Astrocyte of the cerebellum (primary cell): ENCODE measurements at regions of chr3 and their contacts with region 1.

Region 1: DNA sequence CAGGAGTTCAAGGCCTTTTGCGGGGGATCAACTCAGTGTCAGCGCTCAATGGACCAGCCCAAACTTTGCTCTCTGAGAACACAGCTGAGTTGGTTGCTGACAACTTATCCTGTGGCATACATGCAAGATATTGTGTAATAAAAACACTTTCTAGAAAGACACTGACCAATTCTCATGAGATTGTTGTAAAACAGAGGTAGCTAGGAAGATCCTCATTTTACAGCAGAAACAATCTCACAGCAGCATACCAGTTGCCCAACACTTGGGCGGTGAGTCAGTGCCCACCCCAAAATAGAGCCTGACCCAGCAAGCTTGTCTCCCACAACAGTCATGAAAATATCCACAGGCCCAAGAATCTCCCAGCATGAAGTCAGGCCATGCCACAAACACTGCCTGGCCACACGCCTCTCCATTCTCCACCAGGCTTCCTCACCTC is 18.2 kb downstream of the KLHL6 start:
- DNase-seq: no peak
- H3K4me3 ChIP-seq: no peak overlapping the region
- CTCF ChIP-seq: no peak

Region 2: DNA sequence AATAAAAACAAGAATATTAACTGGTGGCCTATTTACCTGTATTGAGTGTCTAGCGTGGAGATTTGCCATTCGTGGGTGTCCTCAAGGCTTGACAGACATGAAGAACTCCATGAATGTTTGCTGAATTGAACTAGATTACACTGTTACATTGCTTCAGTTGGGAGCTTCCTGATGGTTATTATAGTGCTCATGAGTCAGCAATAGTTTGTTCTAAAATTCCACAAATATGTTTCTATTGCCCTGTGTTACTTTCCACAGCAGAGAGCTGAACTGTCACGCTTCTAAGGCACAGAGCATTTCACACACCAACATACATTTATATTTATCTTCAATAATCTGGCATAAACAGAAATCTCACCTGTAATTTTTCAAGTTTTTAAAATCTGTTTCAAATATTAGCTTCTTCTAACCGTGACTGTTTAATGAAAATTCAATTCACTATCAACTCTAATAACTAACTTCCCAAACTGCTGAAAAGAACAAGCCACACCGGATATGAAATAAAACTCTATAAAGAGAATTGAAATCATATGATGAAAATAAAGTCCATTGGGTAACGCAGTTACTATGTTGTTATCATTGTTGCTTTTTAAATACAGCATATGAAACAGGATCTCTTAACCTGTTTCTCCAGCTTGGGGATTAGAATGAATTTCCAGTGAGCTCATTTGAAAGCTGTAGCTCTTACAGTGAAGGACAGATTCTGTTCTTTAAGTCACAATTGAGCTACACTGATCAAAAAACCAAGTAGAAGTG is 47.7 kb before region 1 on chr3:
- in situ Hi-C with region 1: loop called (anchors 5 kb)
- DNase-seq: no peak
- H3K4me3 ChIP-seq: no peak overlapping the region
- CTCF ChIP-seq: no peak